ENCODE measurements at regions of chrX and their contacts with region 1.

Region 1: GRCh38 chrX:71254092-71254941 is at the start of gene ZMYM3:
- DNase-seq: peak; percentile 50 to 91 (median 80)
- ATAC-seq: peak; percentile 79
- H3K4me3 ChIP-seq: peak within 1 kb of the TSS; percentile 79 to 84
- H3K4me3 Mint-ChIP-seq: peak within 1 kb of the TSS; percentile 94
- H3K27ac ChIP-seq: peak within 1 kb of the TSS; percentile 85 to 87
- H3K27ac Mint-ChIP-seq: peak within 1 kb of the TSS; percentile 92
- H3K4me1 ChIP-seq: peaks cover 28% of the 10 kb centered on the region
- H3K4me1 Mint-ChIP-seq: peaks cover 26% of the 10 kb centered on the region
- H3K27me3 ChIP-seq: no peaks in the 10 kb centered on the region
- H3K27me3 Mint-ChIP-seq: no peaks in the 10 kb centered on the region
- CTCF ChIP-seq: no peak
- total RNA-seq, gene ZMYM3: 12.2 to 13.2 TPM

Region 2: DNA sequence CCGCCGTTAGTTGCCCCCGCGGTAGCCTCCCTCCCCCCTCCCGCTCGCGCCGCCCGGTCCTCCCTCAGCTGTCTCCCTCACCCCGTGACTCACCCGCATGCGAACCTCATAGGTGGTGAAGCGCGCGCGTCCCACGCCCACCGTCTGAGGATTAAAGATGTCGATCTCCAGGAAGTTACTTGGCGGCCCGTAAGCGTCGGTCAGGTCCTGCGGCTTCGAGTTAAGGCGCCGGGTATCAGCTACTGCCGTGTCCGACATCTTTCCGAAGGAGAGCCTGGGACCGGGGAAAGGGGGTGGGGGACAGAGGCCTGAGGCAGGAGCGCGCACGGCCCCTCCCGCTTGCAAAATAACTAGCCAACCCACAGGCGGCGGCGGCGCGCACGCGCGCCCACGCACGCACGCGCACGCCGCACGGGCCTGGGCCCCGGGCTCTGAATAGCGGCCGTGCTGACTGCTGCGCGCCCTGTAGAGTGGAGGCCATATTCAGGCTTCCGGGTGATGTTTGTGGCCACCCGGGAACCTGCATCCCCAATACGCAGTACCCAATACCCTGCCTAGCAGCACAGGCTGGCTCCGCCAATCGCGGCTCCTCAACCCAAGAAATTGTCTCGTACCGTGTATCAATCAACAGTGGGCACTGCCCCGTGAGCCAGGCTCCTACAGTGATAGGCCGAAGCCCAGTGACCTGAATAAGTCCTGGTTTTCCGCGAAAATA is 186.1 kb before region 1 on chrX and contains the start of gene SNX12:
- CTCF ChIA-PET with region 1: no interaction called
- POLR2A ChIA-PET with region 1: no interaction called
- intact Hi-C with region 1: loop called (anchors 1 to 10 kb)
- DNase-seq: peak; percentile 70 to 95 (median 84)
- ATAC-seq: peak; percentile 92
- H3K4me3 ChIP-seq: peak within 1 kb of the TSS; percentile 76 to 88
- H3K4me3 Mint-ChIP-seq: peak within 1 kb of the TSS; percentile 94
- H3K27ac ChIP-seq: peak within 1 kb of the TSS; percentile 86 to 91
- H3K27ac Mint-ChIP-seq: peak within 1 kb of the TSS; percentile 99
- H3K4me1 ChIP-seq: peaks cover 13% of the 10 kb centered on the region
- H3K4me1 Mint-ChIP-seq: peaks cover 27% of the 10 kb centered on the region
- H3K27me3 ChIP-seq: no peaks in the 10 kb centered on the region
- H3K27me3 Mint-ChIP-seq: no peaks in the 10 kb centered on the region
- CTCF ChIP-seq: no peak
- total RNA-seq, gene SNX12: 23.9 to 27.1 TPM

Region 3: GRCh38 chrX:71198066-71198465 is 56.3 kb before region 1 on chrX:
- CTCF ChIA-PET with region 1: interaction called, 3 read pairs
- POLR2A ChIA-PET with region 1: interaction called, 3 read pairs
- intact Hi-C with region 1: loop called in 1 of 2 experiments (anchors 1 kb)
- DNase-seq: peak in 2 of 9 experiments; percentile 23 to 54
- ATAC-seq: peak; percentile 43
- H3K4me3 ChIP-seq: peak overlapping the region; percentile 52 to 53
- H3K4me3 Mint-ChIP-seq: peak overlapping the region; percentile 92
- H3K27ac ChIP-seq: peak overlapping the region; percentile 48 to 79
- H3K27ac Mint-ChIP-seq: peak overlapping the region; percentile 97
- H3K4me1 ChIP-seq: peaks cover 4% of the 10 kb centered on the region
- H3K4me1 Mint-ChIP-seq: peaks cover 33% of the 10 kb centered on the region
- H3K27me3 ChIP-seq: no peaks in the 10 kb centered on the region
- H3K27me3 Mint-ChIP-seq: no peaks in the 10 kb centered on the region
- CTCF ChIP-seq: no peak

Region 4: GRCh38 chrX:71283403-71284143 is 29.3 kb after region 1 on chrX and contains the start of gene NONO:
- CTCF ChIA-PET with region 1: interaction called, 3 read pairs
- POLR2A ChIA-PET with region 1: interaction called, 31 read pairs
- intact Hi-C with region 1: loop called (anchors 1 kb)
- DNase-seq: peak; percentile 56 to 98 (median 80)
- ATAC-seq: peak; percentile 85
- H3K4me3 ChIP-seq: peak within 1 kb of the TSS; percentile 65 to 86
- H3K4me3 Mint-ChIP-seq: peak within 1 kb of the TSS; percentile 99
- H3K27ac ChIP-seq: peak within 1 kb of the TSS; percentile 90 to 98
- H3K27ac Mint-ChIP-seq: peak within 1 kb of the TSS; percentile 100
- H3K4me1 ChIP-seq: peaks cover 26% of the 10 kb centered on the region
- H3K4me1 Mint-ChIP-seq: peaks cover 24% of the 10 kb centered on the region
- H3K27me3 ChIP-seq: no peaks in the 10 kb centered on the region
- H3K27me3 Mint-ChIP-seq: no peaks in the 10 kb centered on the region
- CTCF ChIP-seq: no peak
- total RNA-seq, gene NONO: 488 to 500 TPM

Region 5: DNA sequence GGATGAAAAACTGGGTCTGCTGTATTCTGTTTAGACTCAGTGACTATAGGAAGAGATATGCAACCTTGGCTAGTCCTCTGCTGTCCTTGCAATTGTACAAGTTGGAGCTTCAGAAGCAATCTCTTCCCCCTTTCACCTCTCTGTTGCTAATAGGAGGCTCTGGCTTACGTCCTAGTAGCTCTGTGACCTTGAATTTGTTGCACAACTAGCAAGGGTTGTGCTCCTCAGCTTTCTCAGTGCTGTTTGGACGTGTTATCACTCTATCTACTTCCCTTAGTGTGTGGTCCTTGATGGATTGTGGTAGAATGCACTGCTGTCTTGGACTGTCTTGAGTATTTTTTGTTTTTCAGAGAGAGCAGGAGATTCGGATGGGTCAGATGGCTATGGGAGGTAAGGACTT is 43.8 kb after region 1 on chrX:
- CTCF ChIA-PET with region 1: no interaction called
- POLR2A ChIA-PET with region 1: no interaction called
- intact Hi-C with region 1: loop called in 1 of 2 experiments (anchors 5 kb)
- DNase-seq: no peak
- ATAC-seq: no peak
- H3K4me3 ChIP-seq: no peak overlapping the region
- H3K4me3 Mint-ChIP-seq: no peak overlapping the region
- H3K27ac ChIP-seq: no peak overlapping the region
- H3K27ac Mint-ChIP-seq: no peak overlapping the region
- H3K4me1 ChIP-seq: no peaks in the 10 kb centered on the region
- H3K4me1 Mint-ChIP-seq: peaks cover 2% of the 10 kb centered on the region
- H3K27me3 ChIP-seq: no peaks in the 10 kb centered on the region
- H3K27me3 Mint-ChIP-seq: no peaks in the 10 kb centered on the region
- CTCF ChIP-seq: no peak

Region 6: DNA sequence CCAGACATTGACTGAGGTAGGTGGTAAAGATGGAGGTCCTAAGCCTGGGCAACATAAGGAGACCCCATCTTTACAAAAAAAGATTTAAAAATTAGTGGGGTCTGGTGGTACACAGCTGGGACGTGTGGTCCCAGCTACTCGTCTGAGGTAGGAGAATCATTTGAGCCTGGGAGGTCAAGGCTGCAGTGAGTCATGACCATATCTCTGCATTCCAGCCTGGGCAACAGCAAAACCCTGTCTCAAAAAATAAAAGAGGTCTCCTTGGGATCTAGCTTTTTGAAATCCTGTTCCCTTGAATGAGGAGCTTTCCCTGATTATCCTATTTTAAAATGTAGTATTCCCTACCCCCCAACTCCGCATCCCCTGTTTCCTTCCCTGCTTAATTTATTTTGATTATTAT is 199.9 kb after region 1 on chrX:
- CTCF ChIA-PET with region 1: no interaction called
- POLR2A ChIA-PET with region 1: no interaction called
- intact Hi-C with region 1: no loop called
- DNase-seq: no peak
- ATAC-seq: no peak
- H3K4me3 ChIP-seq: no peak overlapping the region
- H3K4me3 Mint-ChIP-seq: no peak overlapping the region
- H3K27ac ChIP-seq: no peak overlapping the region
- H3K27ac Mint-ChIP-seq: peak overlapping the region; percentile 27
- H3K4me1 ChIP-seq: no peaks in the 10 kb centered on the region
- H3K4me1 Mint-ChIP-seq: no peaks in the 10 kb centered on the region
- H3K27me3 ChIP-seq: no peaks in the 10 kb centered on the region
- H3K27me3 Mint-ChIP-seq: no peaks in the 10 kb centered on the region
- CTCF ChIP-seq: no peak

Region 7: DNA sequence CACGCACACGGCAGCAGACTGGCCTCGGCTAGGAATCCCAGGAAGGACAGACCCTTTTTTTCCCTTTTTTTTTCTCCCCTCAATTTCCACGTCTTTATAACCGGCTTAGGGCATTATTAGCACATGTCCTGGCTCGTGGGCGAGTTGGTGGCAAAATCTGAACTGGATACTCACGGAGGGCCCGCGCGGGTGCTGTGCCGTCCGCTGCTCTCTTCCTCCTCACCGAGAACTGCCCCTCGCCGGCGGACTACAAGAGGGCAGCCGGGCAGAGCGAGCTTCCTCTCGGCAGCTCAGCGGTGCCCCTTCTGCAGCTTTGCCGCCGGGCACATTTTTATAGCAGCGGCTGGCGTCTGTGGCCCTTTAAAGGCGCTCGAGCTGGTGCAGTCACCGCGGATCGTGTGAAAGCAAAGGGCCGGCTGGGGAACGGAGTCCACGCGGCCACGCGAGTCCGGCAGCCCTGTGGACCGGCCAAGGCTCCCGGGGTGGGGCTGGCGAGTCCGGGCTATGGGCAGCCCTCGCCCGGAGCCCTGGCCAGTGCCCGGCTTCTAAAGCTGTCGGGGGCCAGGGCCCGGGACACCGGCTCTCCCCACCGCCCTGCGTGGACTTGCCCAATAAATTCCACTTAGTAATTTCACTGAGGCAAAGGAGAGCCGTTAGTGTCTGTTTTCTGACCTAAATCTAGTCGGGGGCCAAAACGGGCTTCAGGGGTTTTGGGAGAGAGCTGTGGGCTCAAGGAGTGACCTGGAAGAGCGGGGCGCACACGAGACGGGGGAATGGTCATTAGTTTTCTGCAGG is 1052.7 kb after region 1 on chrX:
- CTCF ChIA-PET with region 1: no interaction called
- POLR2A ChIA-PET with region 1: no interaction called
- intact Hi-C with region 1: loop called in 1 of 2 experiments (anchors 5 kb)
- DNase-seq: peak in 4 of 9 experiments; percentile 13 to 50 (median 32)
- ATAC-seq: peak; percentile 41
- H3K4me3 ChIP-seq: peak overlapping the region; percentile 35 to 47
- H3K4me3 Mint-ChIP-seq: peak overlapping the region; percentile 85
- H3K27ac ChIP-seq: no peak overlapping the region
- H3K27ac Mint-ChIP-seq: no peak overlapping the region
- H3K4me1 ChIP-seq: peaks cover 24% of the 10 kb centered on the region
- H3K4me1 Mint-ChIP-seq: peaks cover 30% of the 10 kb centered on the region
- H3K27me3 ChIP-seq: peaks cover 15 to 19% of the 10 kb centered on the region in 2 experiments
- H3K27me3 Mint-ChIP-seq: peaks cover 47% of the 10 kb centered on the region
- CTCF ChIP-seq: no peak